Naive thymus-derived CD4-positive, alpha-beta T cell (primary cell): ENCODE measurements at regions of chr6 and their contacts with region 1.

Region 1: GRCh38 chr6:106163446-106163965 is 77.4 kb downstream of the PRDM1 start:
- DNase-seq: peak in 1 of 9 donors; percentile 51
- ATAC-seq: peak; percentile 60
- H3K4me3 ChIP-seq: no peak overlapping the region
- H3K4me3 Mint-ChIP-seq: peak overlapping the region in 7 of 10 donors; percentile 14 to 77 (median 31)
- H3K27ac ChIP-seq: no peak overlapping the region
- H3K27ac Mint-ChIP-seq: peak overlapping the region in 6 of 9 donors; percentile 14 to 98 (median 34)
- H3K4me1 ChIP-seq: peaks cover 6 to 26% of the 10 kb centered on the region in 2 donors
- H3K4me1 Mint-ChIP-seq: peaks cover 13 to 56% (median 22%) of the 10 kb centered on the region in 7 donors
- H3K27me3 ChIP-seq: no peaks in the 10 kb centered on the region
- H3K27me3 Mint-ChIP-seq: peaks cover 0 to 3% (median 0%) of the 10 kb centered on the region in 5 donors

Region 2: GRCh38 chr6:106114492-106115265 is 48.8 kb before region 1 on chr6:
- CTCF ChIA-PET with region 1: no interaction called
- POLR2A ChIA-PET with region 1: no interaction called
- intact Hi-C with region 1: loop called (anchors 2 to 5 kb)
- DNase-seq: peak in 1 of 9 donors; percentile 64
- ATAC-seq: no peak
- H3K4me3 ChIP-seq: peak overlapping the region; percentile 28
- H3K4me3 Mint-ChIP-seq: peak overlapping the region in 3 of 10 donors; percentile 11 to 52 (median 15)
- H3K27ac ChIP-seq: no peak overlapping the region
- H3K27ac Mint-ChIP-seq: peak overlapping the region in 2 of 9 donors; percentile 47 to 59
- H3K4me1 ChIP-seq: peaks cover 39 to 78% of the 10 kb centered on the region in 2 donors
- H3K4me1 Mint-ChIP-seq: peaks cover 39 to 84% (median 61%) of the 10 kb centered on the region in 7 donors
- H3K27me3 ChIP-seq: no peaks in the 10 kb centered on the region
- H3K27me3 Mint-ChIP-seq: peaks cover 0 to 5% (median 0%) of the 10 kb centered on the region in 5 donors

Region 3: DNA sequence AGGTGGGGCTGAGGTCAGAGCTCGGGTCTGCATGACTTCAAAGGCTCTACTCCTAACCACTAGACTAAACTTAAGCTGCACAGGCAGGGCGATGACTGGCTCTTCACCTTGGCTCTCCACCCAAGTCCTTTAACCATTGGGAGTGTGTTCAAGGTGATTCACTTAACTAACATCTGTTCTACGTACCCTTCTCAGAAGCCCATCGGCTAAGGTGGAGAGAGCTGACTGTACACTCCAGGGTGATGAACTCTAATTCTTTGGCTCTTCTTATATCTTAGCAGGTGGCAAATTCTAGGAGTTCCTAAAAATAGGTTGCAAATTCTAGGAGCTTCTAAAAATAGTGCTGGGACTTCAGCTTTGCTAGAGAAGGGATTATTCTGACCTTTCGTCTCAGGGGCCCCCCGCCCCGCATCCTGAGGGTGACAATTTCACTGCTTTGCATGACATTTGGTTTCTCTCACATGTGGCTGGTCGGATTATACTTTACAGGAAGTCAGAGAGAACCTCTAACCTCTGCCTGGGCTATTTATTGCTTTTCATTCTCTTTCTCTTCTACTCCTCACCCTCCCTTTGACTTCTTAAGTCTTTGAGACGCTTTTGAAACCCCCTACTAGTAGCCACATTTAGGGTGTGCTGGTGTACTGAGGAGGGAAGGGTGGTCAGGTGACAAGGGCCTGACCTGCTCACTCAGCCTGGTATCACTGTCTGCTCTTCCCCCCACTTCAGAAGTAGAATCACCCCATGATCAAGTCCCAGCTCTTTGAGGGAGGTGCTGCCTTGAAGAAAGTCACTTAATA is 21.9 kb before region 1 on chr6:
- CTCF ChIA-PET with region 1: no interaction called
- POLR2A ChIA-PET with region 1: no interaction called
- intact Hi-C with region 1: loop called in 1 of 2 experiments (anchors 1 kb)
- DNase-seq: peak in 4 of 9 donors; percentile 28 to 46 (median 30)
- ATAC-seq: peak; percentile 77
- H3K4me3 ChIP-seq: peak overlapping the region; percentile 11
- H3K4me3 Mint-ChIP-seq: peak overlapping the region; percentile 47 to 83 (median 69)
- H3K27ac ChIP-seq: peak overlapping the region; percentile 36
- H3K27ac Mint-ChIP-seq: peak overlapping the region; percentile 6 to 91 (median 67)
- H3K4me1 ChIP-seq: peaks cover 23 to 35% of the 10 kb centered on the region in 2 donors
- H3K4me1 Mint-ChIP-seq: peaks cover 17 to 60% (median 33%) of the 10 kb centered on the region in 7 donors
- H3K27me3 ChIP-seq: no peaks in the 10 kb centered on the region
- H3K27me3 Mint-ChIP-seq: no peaks in the 10 kb centered on the region

Region 4: GRCh38 chr6:106149472-106150069 is 13.9 kb before region 1 on chr6:
- CTCF ChIA-PET with region 1: no interaction called
- POLR2A ChIA-PET with region 1: no interaction called
- intact Hi-C with region 1: loop called in 1 of 2 experiments (anchors 1 kb)
- DNase-seq: peak in 2 of 9 donors; percentile 7 to 15
- ATAC-seq: peak; percentile 67
- H3K4me3 ChIP-seq: no peak overlapping the region
- H3K4me3 Mint-ChIP-seq: peak overlapping the region in 1 of 10 donors; percentile 18
- H3K27ac ChIP-seq: no peak overlapping the region
- H3K27ac Mint-ChIP-seq: peak overlapping the region in 7 of 9 donors; percentile 2 to 65 (median 44)
- H3K4me1 ChIP-seq: peaks cover 0 to 24% of the 10 kb centered on the region in 2 donors
- H3K4me1 Mint-ChIP-seq: peaks cover 0 to 48% (median 10%) of the 10 kb centered on the region in 7 donors
- H3K27me3 ChIP-seq: no peaks in the 10 kb centered on the region
- H3K27me3 Mint-ChIP-seq: no peaks in the 10 kb centered on the region

Region 5: GRCh38 chr6:106187424-106187982 is 24.0 kb after region 1 on chr6:
- CTCF ChIA-PET with region 1: no interaction called
- POLR2A ChIA-PET with region 1: no interaction called
- intact Hi-C with region 1: loop called in 1 of 2 experiments (anchors 1 kb)
- DNase-seq: no peak
- ATAC-seq: no peak
- H3K4me3 ChIP-seq: no peak overlapping the region
- H3K4me3 Mint-ChIP-seq: peak overlapping the region in 2 of 10 donors; percentile 5 to 36
- H3K27ac ChIP-seq: no peak overlapping the region
- H3K27ac Mint-ChIP-seq: peak overlapping the region in 2 of 9 donors; percentile 2 to 36
- H3K4me1 ChIP-seq: peaks cover 0 to 28% of the 10 kb centered on the region in 2 donors
- H3K4me1 Mint-ChIP-seq: peaks cover 6 to 54% (median 15%) of the 10 kb centered on the region in 7 donors
- H3K27me3 ChIP-seq: no peaks in the 10 kb centered on the region
- H3K27me3 Mint-ChIP-seq: no peaks in the 10 kb centered on the region

Region 6: GRCh38 chr6:106194949-106195921 is 31.7 kb after region 1 on chr6:
- CTCF ChIA-PET with region 1: no interaction called
- POLR2A ChIA-PET with region 1: no interaction called
- intact Hi-C with region 1: loop called in 1 of 2 experiments (anchors 1 kb)
- DNase-seq: peak in 7 of 9 donors; percentile 43 to 70 (median 57)
- ATAC-seq: peak; percentile 81
- H3K4me3 ChIP-seq: peak overlapping the region; percentile 21
- H3K4me3 Mint-ChIP-seq: peak overlapping the region; percentile 19 to 80 (median 71)
- H3K27ac ChIP-seq: peak overlapping the region; percentile 30
- H3K27ac Mint-ChIP-seq: peak overlapping the region; percentile 64 to 91 (median 84)
- H3K4me1 ChIP-seq: peaks cover 30 to 36% of the 10 kb centered on the region in 2 donors
- H3K4me1 Mint-ChIP-seq: peaks cover 24 to 54% (median 41%) of the 10 kb centered on the region in 7 donors
- H3K27me3 ChIP-seq: no peaks in the 10 kb centered on the region
- H3K27me3 Mint-ChIP-seq: no peaks in the 10 kb centered on the region